RWPE1 (cell line): ENCODE measurements at regions of chr6 and their contacts with region 1.

Region 1: GRCh38 chr6:20441921-20442320 is 40.2 kb downstream of the E2F3 start:
- DNase-seq: no peak
- H3K27ac ChIP-seq: no peak overlapping the region
- CTCF ChIP-seq: no peak

Region 2: GRCh38 chr6:20266851-20267608 is 174.9 kb before region 1 on chr6:
- CTCF ChIA-PET with region 1: no interaction called
- POLR2A ChIA-PET with region 1: no interaction called
- DNase-seq: peak; percentile 95
- H3K27ac ChIP-seq: no peak overlapping the region
- CTCF ChIP-seq: no peak

Region 3: DNA sequence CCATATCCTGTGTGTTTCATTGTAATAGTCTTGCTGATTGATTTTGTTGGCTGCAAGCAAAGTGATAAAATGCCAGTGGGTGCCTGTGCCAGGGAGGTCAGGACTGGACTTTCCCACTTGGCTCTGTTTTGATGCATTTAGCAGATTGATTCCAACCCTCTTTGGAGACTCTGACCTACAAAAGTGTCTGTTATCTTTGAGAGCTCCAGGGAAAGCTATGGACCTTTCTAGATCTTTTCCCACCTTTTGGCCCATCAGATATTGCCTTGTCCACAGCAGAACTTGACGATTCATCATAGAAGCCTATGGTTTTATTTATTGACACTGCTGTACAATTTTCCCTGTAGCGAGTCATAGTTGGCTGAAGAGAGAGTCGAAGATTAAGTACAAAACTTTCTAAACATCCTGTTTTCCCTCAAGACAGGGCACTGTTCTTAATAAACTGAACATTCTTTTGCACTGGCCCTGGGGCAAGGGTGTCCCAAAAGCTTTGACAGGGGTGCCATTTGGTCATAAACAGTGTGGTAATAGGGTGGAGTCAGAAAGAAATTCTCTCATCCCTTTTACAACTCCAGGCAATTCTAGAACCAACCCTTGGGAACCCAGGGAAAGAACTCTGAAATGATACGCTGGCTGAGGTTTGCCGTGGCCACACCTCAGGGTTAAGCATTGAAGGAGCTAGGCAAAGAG is 13.5 kb after region 1 on chr6:
- CTCF ChIA-PET with region 1: no interaction called
- POLR2A ChIA-PET with region 1: no interaction called
- DNase-seq: peak; percentile 26
- H3K27ac ChIP-seq: no peak overlapping the region
- CTCF ChIP-seq: no peak

Region 4: GRCh38 chr6:20538131-20538662 is 96.3 kb after region 1 on chr6:
- CTCF ChIA-PET with region 1: no interaction called
- POLR2A ChIA-PET with region 1: interaction called, 10 read pairs
- DNase-seq: no peak
- H3K27ac ChIP-seq: no peak overlapping the region
- CTCF ChIP-seq: no peak